ENCODE measurements at regions of chr14 and their contacts with region 1.

Region 1: DNA sequence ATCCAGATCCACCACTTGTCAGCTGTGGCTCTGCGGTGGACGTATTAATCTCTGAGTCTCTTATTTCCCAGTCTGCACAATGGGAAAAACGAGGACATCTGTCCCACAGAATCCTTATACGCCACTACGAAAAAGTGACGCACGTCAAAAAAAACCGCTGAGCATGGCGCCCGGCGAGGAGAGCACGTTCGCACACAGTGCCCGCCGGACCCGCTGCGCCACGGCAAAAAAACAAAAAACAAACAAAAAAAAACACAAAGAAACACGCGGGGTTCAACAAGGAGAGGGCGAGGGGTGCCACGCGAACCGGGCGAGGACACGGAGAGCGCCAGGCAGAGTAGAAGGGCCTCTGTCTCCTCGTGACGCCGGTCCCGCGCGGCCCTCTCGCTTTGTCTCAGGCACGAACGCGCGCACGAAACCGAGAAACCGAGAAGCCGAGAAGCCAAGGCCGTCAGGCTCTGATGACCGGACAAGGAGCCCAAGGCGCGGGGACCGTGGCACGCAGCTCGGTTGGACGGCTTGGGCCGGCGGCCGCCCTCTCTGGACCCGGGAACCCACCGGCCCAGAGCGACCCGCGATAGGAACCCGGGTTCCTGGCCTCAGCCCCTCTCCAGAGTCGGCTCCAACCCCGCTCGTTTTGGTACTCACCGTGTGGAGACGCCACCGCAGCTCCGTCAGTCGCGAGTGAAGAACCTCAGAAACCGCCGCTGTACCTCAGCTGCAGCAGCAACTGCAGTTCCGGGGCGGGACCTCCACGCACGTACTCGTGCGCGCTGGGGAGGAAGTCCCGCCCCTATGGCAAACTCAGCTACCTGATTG is at the start of gene DDX24:
- H3K4me3 Mint-ChIP-seq: peak within 1 kb of the TSS; percentile 94
- H3K27ac Mint-ChIP-seq: peak within 1 kb of the TSS; percentile 96
- H3K4me1 Mint-ChIP-seq: peaks cover 35% of the 10 kb centered on the region
- H3K27me3 Mint-ChIP-seq: no peaks in the 10 kb centered on the region

Region 2: DNA sequence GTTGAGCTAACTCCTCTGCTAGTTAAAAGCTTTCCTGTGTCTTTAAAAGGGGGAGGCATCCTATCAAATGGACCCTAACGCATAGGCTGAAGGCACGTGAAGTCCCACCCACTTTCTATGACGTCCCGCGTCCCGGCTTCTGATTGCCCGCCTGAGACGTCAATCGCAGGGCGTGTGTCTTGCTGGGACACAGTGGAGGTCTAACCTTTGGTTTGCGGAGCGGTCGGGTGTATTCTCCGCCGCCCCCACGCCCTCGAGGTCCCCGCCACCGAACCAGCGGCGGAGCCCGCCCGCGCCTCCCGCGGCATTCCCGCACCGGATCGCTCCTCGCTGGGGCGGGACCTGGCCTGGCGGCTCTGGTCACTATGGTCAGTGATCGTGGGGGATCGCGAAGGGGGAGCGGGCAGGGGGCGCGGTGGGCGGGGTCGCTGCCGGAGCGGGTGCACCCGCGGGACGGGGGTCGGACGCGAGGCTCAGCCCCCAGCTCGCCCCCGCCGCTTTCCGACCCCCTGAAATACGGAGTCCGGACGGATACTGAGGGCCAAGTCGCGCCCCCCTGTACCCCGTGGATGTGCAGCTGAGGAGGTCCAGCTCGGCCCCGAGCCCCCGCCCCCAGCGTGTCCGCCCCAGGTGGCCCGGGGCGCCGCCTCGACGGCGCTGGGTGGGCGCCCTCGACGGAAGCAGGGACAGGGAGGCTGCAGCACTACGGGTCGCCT is 54.3 kb before region 1 on chr14 and contains the start of gene OTUB2:
- intact Hi-C with region 1: loop called (anchors 5 kb)
- H3K4me3 Mint-ChIP-seq: peak within 1 kb of the TSS; percentile 66
- H3K27ac Mint-ChIP-seq: peak within 1 kb of the TSS; percentile 20
- H3K4me1 Mint-ChIP-seq: peaks cover 48% of the 10 kb centered on the region
- H3K27me3 Mint-ChIP-seq: peaks cover 4% of the 10 kb centered on the region

Region 3: DNA sequence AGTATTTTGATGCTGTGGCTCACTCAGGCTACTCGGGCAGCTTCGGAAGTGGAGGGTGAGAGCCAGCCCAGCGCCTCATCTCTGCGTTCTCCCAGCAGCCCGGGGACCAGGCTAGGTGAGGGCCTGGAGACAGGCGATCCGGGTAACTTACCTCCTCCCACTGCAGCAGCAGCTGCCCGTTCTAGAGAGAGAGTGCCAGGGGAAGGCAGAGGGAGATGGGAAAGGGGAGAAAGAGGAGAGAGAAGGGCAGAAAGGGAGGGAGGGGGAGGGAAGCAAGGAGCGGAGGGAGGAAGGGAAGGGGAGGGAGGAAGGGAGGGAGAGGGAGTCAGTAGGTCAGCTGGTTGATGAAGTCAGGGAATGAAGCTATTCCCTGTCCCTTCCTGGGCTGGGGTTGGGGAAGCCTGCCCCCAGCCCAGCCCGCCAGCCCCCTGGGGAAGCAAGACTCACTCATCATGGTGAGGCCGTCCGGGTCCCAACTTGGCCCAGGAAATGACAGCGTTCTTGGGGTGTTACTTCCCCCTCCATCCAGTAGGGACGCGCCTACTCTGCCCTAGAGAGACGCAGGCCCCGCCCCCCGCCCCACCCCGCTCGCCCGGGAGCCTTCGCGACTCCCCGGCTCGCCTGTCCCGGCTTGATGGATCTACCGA is 48.6 kb after region 1 on chr14 and contains the start of gene IFI27L2:
- intact Hi-C with region 1: loop called (anchors 1 kb)
- H3K4me3 Mint-ChIP-seq: peak within 1 kb of the TSS; percentile 88
- H3K27ac Mint-ChIP-seq: peak within 1 kb of the TSS; percentile 84
- H3K4me1 Mint-ChIP-seq: peaks cover 27% of the 10 kb centered on the region
- H3K27me3 Mint-ChIP-seq: peaks cover 11% of the 10 kb centered on the region

Region 4: GRCh38 chr14:94136575-94137331 is 56.1 kb after region 1 on chr14:
- intact Hi-C with region 1: loop called (anchors 2 kb)
- H3K4me3 Mint-ChIP-seq: no peak overlapping the region
- H3K27ac Mint-ChIP-seq: no peak overlapping the region
- H3K4me1 Mint-ChIP-seq: no peaks in the 10 kb centered on the region
- H3K27me3 Mint-ChIP-seq: peaks cover 17% of the 10 kb centered on the region

Measured in dendritic cell treated with granulocyte-macrophage colony-stimulating factor and Interleukin-4, amounts not matched to agents 40 ng/mL and 50 ng/mL, for 4 days (primary cell).